Activated naive CD4-positive, alpha-beta T cell treated with anti-CD3 and anti-CD28 coated beads for 36 hours (primary cell): ENCODE measurements at regions of chr2 and their contacts with region 1.

Region 1: DNA sequence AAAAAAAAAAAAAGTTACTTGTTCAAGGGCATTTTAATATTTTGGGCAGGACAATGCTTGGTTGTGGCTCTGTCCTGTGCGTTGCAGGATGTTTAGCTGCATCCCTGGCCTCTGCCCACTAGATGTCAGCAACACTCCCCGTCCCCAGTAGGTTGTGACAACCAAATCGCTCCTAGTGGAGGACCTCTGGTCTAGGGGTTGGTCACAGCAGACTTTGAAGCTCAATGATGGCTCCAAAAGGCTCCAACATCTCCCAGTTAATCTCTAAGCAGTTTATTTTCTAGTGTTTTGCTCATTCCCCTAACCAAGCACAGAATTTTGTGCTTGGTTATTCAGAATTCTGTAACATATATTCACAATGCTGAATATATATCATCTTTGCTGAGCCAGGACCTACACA is 67.0 kb downstream of the CHRNA1 start:
- DNase-seq: peak; percentile 80
- H3K4me3 Mint-ChIP-seq: no peak overlapping the region
- H3K27ac Mint-ChIP-seq: no peak overlapping the region
- H3K4me1 Mint-ChIP-seq: no peaks in the 10 kb centered on the region
- H3K27me3 Mint-ChIP-seq: no peaks in the 10 kb centered on the region

Region 2: GRCh38 chr2:173571021-173571882 is 1126.0 kb before region 1 on chr2:
- CTCF ChIA-PET with region 1: no interaction called
- intact Hi-C with region 1: no loop called
- DNase-seq: peak; percentile 8
- H3K4me3 Mint-ChIP-seq: no peak overlapping the region
- H3K27ac Mint-ChIP-seq: no peak overlapping the region
- H3K4me1 Mint-ChIP-seq: peaks cover 4% of the 10 kb centered on the region
- H3K27me3 Mint-ChIP-seq: peaks cover 6% of the 10 kb centered on the region

Region 3: GRCh38 chr2:174465327-174465726 is 231.9 kb before region 1 on chr2:
- CTCF ChIA-PET with region 1: interaction called, 47 read pairs
- intact Hi-C with region 1: no loop called
- DNase-seq: no peak
- H3K4me3 Mint-ChIP-seq: no peak overlapping the region
- H3K27ac Mint-ChIP-seq: no peak overlapping the region
- H3K4me1 Mint-ChIP-seq: no peaks in the 10 kb centered on the region
- H3K27me3 Mint-ChIP-seq: no peaks in the 10 kb centered on the region

Region 4: DNA sequence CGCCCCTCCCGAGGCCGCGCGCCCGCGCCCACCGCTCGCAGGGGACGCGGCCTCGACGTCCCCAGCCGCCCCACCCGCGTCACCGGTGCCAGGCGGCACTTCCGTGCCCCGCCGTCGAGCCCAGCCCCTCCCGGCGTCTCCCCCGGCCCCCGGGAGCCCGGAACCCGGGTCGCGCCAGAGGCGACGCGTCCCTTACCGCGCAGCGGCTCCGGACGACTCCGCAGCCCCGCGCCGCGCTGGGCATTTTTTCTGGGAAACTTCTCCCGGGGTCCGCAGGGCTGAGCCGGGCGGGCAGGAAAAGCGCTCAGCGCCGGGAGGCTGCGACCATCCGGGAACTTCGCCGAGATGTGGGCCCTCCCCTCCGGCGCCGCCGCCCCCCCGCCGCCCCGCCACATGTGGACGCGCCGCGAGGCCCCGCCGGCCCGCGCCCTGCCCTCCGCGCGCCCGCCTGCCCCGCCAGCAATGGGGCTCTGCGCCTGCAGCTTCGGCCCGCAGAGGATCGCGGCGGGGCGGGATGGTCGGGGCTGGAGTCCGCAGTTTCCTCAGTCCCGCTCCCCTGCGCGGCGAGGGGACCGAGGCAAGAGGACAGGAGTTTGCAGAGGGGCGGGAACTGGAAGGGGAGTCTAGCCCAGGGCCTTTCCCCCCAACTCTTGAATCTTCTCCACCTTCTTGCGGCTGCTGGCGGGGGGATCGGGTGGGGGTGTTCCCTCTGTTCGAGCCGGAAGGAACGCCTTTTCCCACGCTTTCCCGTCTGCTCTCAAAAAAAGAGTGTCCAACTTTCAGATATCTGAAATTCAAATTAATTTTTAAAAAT is 14.5 kb before region 1 on chr2:
- CTCF ChIA-PET with region 1: interaction called, 139 read pairs
- intact Hi-C with region 1: no loop called
- DNase-seq: peak; percentile 49
- H3K4me3 Mint-ChIP-seq: peak overlapping the region; percentile 84
- H3K27ac Mint-ChIP-seq: peak overlapping the region; percentile 83
- H3K4me1 Mint-ChIP-seq: peaks cover 50% of the 10 kb centered on the region
- H3K27me3 Mint-ChIP-seq: no peaks in the 10 kb centered on the region

Region 5: DNA sequence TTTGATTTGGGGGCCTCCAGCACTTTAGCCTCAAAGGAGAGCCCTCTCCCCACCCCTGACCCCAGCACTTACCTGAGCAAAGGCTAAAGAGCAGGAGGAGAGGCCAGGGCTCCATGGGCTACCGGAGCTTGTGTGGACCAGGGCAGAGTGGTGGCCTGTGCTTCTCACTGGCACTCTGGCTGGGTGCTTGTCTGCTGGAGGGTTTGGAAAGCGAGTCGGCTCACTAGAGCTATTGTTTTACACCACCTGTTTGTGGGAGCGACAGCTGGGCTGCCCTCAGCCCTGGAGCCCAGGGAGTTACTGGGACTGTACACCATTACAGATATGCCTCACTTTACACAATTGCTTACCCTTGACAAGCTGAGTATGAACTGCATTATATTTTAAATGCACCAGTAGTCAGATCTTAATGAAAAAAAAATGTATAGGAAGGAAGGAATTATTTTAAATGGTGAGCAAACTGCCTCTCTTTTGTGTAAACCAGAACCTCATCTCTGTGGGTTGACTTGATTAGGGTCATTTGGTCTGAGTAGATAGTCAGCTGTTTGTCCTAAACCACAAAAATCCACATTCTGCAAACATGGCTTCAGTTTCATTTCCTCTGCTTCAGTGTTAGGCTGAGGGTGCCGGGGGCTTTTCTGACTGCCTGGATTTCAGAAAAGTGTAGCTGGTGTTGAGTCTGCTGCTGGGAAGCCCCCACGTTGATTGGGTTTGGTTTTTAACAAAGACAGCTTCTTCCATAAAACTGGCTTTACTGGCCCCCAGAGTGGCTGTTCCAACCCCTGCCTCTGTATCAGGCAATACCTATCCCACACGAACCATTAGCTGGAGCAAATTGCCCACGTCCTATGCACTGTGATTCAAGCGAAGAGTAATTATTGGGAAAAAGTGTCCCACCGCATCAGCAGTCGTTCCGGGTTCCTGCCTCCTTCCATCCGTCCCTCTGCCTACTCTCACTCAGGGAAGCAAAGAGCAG is 67.3 kb after region 1 on chr2 and contains the start of gene CHRNA1:
- CTCF ChIA-PET with region 1: interaction called, 10 read pairs
- intact Hi-C with region 1: no loop called
- DNase-seq: no peak
- H3K4me3 Mint-ChIP-seq: no peak within 1 kb of the TSS
- H3K27ac Mint-ChIP-seq: no peak within 1 kb of the TSS
- H3K4me1 Mint-ChIP-seq: peaks cover 8% of the 10 kb centered on the region
- H3K27me3 Mint-ChIP-seq: no peaks in the 10 kb centered on the region
- total RNA-seq, gene CHRNA1: not detected

Region 6: DNA sequence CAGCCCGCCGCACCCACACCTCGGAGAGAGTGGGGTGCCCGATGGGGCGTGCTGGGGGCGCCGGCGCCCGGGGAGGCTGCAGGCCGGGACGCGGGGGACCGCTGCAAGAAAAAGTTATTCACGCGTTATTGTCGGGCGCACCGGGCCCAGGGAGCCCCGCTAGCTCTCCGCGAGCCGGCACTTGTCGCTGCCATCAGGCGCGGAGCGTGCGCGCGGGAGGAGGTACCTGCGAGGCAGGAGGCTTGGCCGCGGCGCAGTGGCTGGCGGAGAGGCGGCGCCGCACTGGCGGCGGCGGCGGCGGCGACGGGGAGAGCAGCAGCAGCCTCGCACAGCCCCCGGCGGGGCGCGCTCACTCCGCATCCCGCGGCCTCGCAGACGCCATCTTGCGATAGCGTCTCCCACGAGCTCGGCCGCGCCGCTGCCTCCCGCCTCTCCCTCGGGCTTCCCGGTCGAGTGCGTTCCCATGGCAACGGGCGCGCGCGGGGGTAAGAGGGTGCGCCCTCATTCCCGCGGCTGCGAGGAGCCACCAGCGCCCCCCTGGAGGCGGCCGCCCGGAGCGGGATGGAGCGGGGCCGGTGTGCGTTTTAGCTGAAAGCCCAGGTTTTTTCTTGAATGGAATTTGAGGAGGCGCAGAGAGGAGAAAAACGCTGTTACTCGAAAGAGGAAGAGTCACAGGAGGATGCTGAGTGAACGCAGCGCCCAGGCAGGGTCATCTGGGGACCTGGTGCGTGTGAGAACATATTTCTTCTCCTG is 307.9 kb after region 1 on chr2 and contains the start of gene CHN1:
- CTCF ChIA-PET with region 1: interaction called, 7 read pairs
- intact Hi-C with region 1: loop called (anchors 5 kb)
- DNase-seq: peak; percentile 67
- H3K4me3 Mint-ChIP-seq: peak within 1 kb of the TSS; percentile 83
- H3K27ac Mint-ChIP-seq: no peak within 1 kb of the TSS
- H3K4me1 Mint-ChIP-seq: peaks cover 11% of the 10 kb centered on the region
- H3K27me3 Mint-ChIP-seq: peaks cover 59% of the 10 kb centered on the region
- total RNA-seq, gene CHN1: 2.1 to 3.3 TPM

Region 7: DNA sequence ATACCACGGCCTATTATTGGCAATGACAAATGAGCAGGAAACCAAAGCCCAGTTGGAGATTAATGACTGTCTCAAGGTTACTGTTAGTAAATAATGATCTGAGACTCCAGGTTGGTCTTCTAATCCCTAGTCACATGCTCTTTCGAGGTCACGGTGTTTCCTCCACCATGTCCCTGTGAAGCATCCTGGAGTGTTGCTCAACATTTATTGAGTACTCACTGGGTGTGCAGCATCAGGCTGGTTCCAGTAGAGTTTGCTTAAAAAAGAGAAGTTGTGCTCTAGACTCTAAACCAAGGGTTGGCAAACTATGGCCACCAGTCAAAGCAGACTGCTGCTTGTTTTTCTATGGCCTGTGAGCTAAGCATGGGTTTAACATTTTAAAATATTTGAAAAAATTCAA is 748.0 kb after region 1 on chr2:
- CTCF ChIA-PET with region 1: no interaction called
- intact Hi-C with region 1: no loop called
- DNase-seq: no peak
- H3K4me3 Mint-ChIP-seq: no peak overlapping the region
- H3K27ac Mint-ChIP-seq: no peak overlapping the region
- H3K4me1 Mint-ChIP-seq: no peaks in the 10 kb centered on the region
- H3K27me3 Mint-ChIP-seq: peaks cover 9% of the 10 kb centered on the region

Region 8: GRCh38 chr2:176096986-176097819 is 1399.9 kb after region 1 on chr2:
- CTCF ChIA-PET with region 1: no interaction called
- intact Hi-C with region 1: loop called (anchors 1 kb)
- DNase-seq: peak; percentile 70
- H3K4me3 Mint-ChIP-seq: peak overlapping the region; percentile 51
- H3K27ac Mint-ChIP-seq: no peak overlapping the region
- H3K4me1 Mint-ChIP-seq: peaks cover 22% of the 10 kb centered on the region
- H3K27me3 Mint-ChIP-seq: peaks cover 80% of the 10 kb centered on the region